ENCODE measurements at regions of chr3 and their contacts with region 1.

Region 1: GRCh38 chr3:94069194-94069813 is 6.4 kb downstream of the NSUN3 start:
- DNase-seq: no peak
- H3K4me3 ChIP-seq: no peak overlapping the region
- H3K27ac ChIP-seq: no peak overlapping the region
- H3K27me3 ChIP-seq: no peaks in the 10 kb centered on the region
- CTCF ChIP-seq: peak; percentile 54

Region 2: GRCh38 chr3:94015025-94015424 is 54.3 kb before region 1 on chr3:
- CTCF ChIA-PET with region 1: interaction called, 10 read pairs
- POLR2A ChIA-PET with region 1: no interaction called
- DNase-seq: no peak
- H3K4me3 ChIP-seq: no peak overlapping the region
- H3K27ac ChIP-seq: no peak overlapping the region
- H3K27me3 ChIP-seq: no peaks in the 10 kb centered on the region
- CTCF ChIP-seq: no peak

Region 3: DNA sequence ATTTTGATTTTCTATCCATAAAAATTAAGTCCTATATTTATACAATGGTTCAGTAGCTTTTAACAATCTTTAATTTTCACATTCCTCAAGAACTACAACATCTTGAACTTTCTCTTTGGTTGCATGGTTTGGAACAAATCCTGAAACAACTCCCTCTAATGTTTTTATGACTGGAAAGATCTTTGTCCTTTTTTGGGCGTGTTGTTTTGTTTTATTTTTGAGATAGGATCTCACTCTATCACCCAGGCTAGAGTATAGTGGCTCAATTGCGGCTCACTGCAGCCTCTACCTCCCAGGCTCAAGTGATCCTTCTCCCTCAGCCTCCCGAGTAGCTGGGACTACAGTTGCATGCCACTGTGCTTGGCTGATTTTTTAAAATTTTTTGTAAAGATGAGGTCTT is 44.9 kb before region 1 on chr3:
- CTCF ChIA-PET with region 1: interaction called, 10 read pairs
- POLR2A ChIA-PET with region 1: no interaction called
- DNase-seq: no peak
- H3K4me3 ChIP-seq: no peak overlapping the region
- H3K27ac ChIP-seq: no peak overlapping the region
- H3K27me3 ChIP-seq: no peaks in the 10 kb centered on the region
- CTCF ChIP-seq: no peak

Region 4: DNA sequence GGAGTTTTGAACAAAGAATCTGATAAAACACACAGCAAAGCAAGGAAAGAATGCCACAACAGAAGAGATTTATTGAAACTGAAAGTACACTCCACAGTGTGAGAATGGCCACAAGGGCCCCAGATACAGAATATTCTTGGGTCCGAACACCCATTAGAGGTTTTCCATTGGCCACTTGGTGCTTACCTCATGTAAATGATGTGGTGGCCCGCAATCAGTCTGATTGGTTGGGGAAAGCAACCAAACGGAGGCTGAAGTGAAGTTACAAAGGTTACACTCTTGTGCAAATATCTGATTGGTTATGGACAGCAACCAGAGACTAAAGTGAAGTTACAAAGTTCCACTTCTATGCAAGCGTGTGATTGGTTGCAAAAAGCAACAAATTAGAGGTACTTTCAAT is 14.0 kb after region 1 on chr3:
- CTCF ChIA-PET with region 1: interaction called, 14 read pairs
- POLR2A ChIA-PET with region 1: no interaction called
- DNase-seq: no peak
- H3K4me3 ChIP-seq: no peak overlapping the region
- H3K27ac ChIP-seq: no peak overlapping the region
- H3K27me3 ChIP-seq: no peaks in the 10 kb centered on the region
- CTCF ChIP-seq: no peak

Region 5: DNA sequence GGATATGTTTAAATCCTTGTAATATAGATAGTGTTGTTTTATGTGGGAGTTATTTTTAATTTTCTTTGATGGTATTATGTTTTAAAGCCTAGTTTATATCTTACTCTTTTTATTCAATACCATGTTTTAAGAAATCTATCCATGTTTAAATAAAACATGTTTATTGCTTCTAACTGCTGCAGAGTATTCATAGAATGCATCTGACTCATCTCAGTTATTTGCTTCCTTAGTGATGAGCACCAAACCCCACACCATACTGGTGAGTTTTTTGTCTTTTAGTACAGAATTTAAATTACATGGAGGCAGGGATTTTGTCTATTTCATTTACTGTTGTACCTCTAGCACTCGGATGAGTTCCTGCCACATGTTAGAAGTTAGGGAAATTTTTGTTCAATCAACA is 202.7 kb after region 1 on chr3:
- CTCF ChIA-PET with region 1: no interaction called
- POLR2A ChIA-PET with region 1: no interaction called
- DNase-seq: no peak
- H3K4me3 ChIP-seq: no peak overlapping the region
- H3K27ac ChIP-seq: no peak overlapping the region
- H3K27me3 ChIP-seq: no peaks in the 10 kb centered on the region
- CTCF ChIP-seq: no peak

Region 6: GRCh38 chr3:94405258-94406035 is 336.1 kb after region 1 on chr3:
- CTCF ChIA-PET with region 1: no interaction called
- POLR2A ChIA-PET with region 1: no interaction called
- DNase-seq: no peak
- H3K4me3 ChIP-seq: no peak overlapping the region
- H3K27ac ChIP-seq: no peak overlapping the region
- H3K27me3 ChIP-seq: no peaks in the 10 kb centered on the region
- CTCF ChIP-seq: no peak

Measured in AG04450 (cell line).